ENCODE measurements at regions of chr17 and their contacts with region 1.

Region 1: GRCh38 chr17:31015639-31016038 is 44.8 kb downstream of the RNF135 start:
- DNase-seq: no peak
- H3K4me3 ChIP-seq: no peak overlapping the region
- CTCF ChIP-seq: no peak
- POLR2A ChIP-seq: no peak

Region 2: DNA sequence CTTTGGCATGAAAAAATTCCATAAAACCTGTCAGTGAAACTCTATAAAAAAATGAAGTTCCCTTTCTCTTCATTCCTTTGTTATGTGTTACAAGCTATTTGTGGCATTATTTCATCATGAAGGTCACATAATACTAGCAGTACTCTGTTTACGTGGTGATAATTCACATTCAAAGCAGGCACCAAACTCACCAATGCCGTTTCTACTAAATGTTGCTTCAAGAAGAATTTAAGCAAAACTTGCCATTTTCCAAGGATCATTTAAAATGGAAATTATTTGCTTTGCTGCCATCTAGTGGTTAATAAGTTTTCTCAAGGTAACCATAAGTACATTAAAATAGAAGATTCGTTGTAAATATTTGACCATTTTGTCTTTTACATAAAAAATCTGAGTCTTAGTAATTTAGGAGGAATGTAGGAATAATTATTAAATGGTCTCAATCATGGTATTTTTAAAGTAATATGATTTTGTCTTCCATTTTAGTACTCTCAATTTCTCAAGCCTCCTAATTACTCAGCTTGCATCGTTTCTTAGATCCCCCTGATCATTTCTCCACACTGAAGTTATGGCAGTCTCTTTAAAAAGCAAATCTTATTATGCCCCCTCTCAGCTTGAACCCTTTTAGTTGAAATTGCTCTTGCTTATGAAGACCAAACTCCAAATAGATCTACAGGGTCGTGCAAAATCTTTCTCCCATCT is 200.6 kb after region 1 on chr17:
- intact Hi-C with region 1: loop called (anchors 10 kb)
- DNase-seq: no peak
- H3K4me3 ChIP-seq: no peak overlapping the region
- CTCF ChIP-seq: no peak
- POLR2A ChIP-seq: no peak

Measured in lower leg skin (tissue), 4 donors.